ENCODE measurements at regions of chr3 and their contacts with region 1.

Region 1: GRCh38 chr3:4756855-4757574 is 222.2 kb upstream of the BHLHE40 start:
- DNase-seq: no peak
- H3K4me3 Mint-ChIP-seq: no peak overlapping the region
- H3K27ac Mint-ChIP-seq: no peak overlapping the region
- H3K4me1 Mint-ChIP-seq: peaks cover 3% of the 10 kb centered on the region
- H3K27me3 Mint-ChIP-seq: no peaks in the 10 kb centered on the region

Region 2: GRCh38 chr3:4771243-4771642 is 14.2 kb after region 1 on chr3:
- CTCF ChIA-PET with region 1: no interaction called
- intact Hi-C with region 1: loop called (anchors 2 kb)
- DNase-seq: no peak
- H3K4me3 Mint-ChIP-seq: no peak overlapping the region
- H3K27ac Mint-ChIP-seq: peak overlapping the region; percentile 12
- H3K4me1 Mint-ChIP-seq: peaks cover 14% of the 10 kb centered on the region
- H3K27me3 Mint-ChIP-seq: no peaks in the 10 kb centered on the region

Region 3: GRCh38 chr3:4834403-4834866 is 77.4 kb after region 1 on chr3:
- CTCF ChIA-PET with region 1: no interaction called
- intact Hi-C with region 1: no loop called
- DNase-seq: peak; percentile 84
- H3K4me3 Mint-ChIP-seq: peak overlapping the region; percentile 13
- H3K27ac Mint-ChIP-seq: peak overlapping the region; percentile 93
- H3K4me1 Mint-ChIP-seq: peaks cover 85% of the 10 kb centered on the region
- H3K27me3 Mint-ChIP-seq: no peaks in the 10 kb centered on the region